Activated T-helper 1 cell treated with anti-CD3 and anti-CD28 coated beads, Interleukin-12 subunit alpha, Interleukin-12 subunit beta, Interleukin-2, Interleukin-4 antibody, amounts not matched to agents 30 ng/mL and 10 ng/mL and 1 ng/mL, durations not matched to agents 14 hours and 24 hours and 36 hours (primary cell): ENCODE measurements at regions of chr3 and their contacts with region 1.

Region 1: DNA sequence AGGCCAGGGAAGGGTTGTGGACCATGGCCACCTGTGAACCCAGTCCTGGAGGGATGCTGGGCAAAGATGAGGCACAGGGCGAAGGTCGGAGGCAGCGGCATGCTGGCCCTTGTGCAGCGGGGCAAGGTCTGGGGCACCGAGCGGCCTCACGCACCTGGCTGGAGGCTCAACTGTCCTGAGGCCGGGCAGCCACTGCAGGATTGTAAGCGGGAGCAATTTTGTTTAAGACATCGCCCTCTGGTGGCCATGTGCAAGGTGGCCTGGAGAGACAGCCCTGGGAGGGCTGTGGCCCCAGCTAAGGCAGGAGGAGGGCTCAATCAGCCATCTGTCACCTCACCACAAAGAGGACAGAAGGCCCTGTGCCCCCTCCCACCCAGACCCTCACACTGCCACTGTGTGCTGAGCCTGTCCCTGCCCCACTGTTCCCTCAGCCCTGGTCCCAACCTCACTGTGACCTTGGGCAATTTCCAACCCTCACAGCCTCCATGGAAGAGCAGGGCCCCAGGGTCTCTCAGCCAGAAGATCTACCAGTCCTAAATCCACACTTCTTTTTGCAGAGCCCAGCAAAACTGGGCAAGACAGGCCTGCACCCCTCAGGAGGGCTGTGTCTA is 46.2 kb downstream of the TPRA1 start:
- DNase-seq: peak; percentile 44
- H3K4me3 Mint-ChIP-seq: no peak overlapping the region
- H3K27ac Mint-ChIP-seq: no peak overlapping the region
- H3K4me1 Mint-ChIP-seq: peaks cover 6% of the 10 kb centered on the region
- H3K27me3 Mint-ChIP-seq: peaks cover 16% of the 10 kb centered on the region

Region 2: DNA sequence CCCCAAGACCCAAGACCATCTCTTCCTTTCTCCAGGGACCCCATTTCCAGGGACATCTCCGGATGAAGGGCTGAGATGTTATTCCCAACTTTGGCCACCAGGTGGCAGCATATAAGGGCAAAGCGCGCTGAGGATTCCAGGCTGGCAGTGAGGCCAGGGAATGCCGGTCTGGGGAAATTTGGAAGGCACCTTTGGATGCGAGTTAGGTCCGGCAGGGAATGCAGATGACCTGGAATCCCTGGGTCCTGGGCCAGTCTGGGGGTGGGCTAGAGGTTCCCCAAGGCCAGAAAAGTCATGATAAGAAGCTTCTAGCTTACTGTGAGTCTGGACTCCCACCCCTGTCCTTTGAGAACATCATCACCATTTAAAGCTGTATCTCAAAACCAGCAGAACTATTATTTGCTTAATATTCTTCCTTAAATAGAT is 1021.9 kb before region 1 on chr3:
- intact Hi-C with region 1: loop called (anchors 2 kb)
- DNase-seq: peak; percentile 11
- H3K4me3 Mint-ChIP-seq: no peak overlapping the region
- H3K27ac Mint-ChIP-seq: no peak overlapping the region
- H3K4me1 Mint-ChIP-seq: no peaks in the 10 kb centered on the region
- H3K27me3 Mint-ChIP-seq: peaks cover 33% of the 10 kb centered on the region

Region 3: GRCh38 chr3:126679318-126679751 is 865.0 kb before region 1 on chr3:
- intact Hi-C with region 1: loop called (anchors 1 kb)
- DNase-seq: peak; percentile 61
- H3K4me3 Mint-ChIP-seq: peak overlapping the region; percentile 21
- H3K27ac Mint-ChIP-seq: no peak overlapping the region
- H3K4me1 Mint-ChIP-seq: peaks cover 4% of the 10 kb centered on the region
- H3K27me3 Mint-ChIP-seq: no peaks in the 10 kb centered on the region

Region 4: GRCh38 chr3:126752303-126752842 is 791.9 kb before region 1 on chr3:
- intact Hi-C with region 1: loop called (anchors 1 kb)
- DNase-seq: peak; percentile 46
- H3K4me3 Mint-ChIP-seq: no peak overlapping the region
- H3K27ac Mint-ChIP-seq: no peak overlapping the region
- H3K4me1 Mint-ChIP-seq: peaks cover 8% of the 10 kb centered on the region
- H3K27me3 Mint-ChIP-seq: no peaks in the 10 kb centered on the region

Region 5: DNA sequence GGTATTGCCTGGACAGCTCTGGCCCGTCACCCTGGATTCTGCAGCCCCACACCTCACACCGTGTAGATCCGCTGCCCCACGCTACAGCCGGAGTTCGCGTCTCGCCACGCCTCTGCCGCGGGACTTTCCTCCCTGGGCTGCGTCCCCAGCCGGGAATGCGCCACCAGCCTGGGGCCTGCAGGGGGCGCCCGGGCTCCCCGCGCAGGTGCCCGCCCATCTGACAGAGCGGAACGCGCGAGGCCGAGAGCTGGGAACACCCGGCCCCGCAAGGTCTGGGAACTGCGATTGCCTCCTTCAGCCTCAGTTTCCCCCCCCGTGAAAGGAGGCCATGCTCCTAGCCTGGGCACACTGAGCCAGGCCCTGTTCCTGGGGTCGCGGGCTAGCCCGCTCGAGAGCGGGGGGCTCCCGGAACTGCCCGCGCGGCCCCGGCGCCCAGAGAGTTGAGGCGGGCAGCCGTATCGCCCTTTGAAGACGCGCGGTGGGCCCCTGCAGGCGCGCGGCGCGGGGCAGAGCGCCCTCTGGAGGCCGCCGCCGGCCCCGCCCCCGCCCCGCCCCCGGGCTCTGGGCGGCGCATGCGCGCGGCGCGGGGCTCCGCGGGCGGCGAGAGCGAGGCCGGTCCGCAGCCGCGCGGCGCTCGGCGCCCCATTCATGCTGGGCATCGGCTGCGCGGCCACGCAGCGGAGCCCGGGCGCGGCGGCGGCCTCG is 561.7 kb before region 1 on chr3 and contains the start of gene PLXNA1:
- intact Hi-C with region 1: loop called (anchors 1 kb)
- DNase-seq: peak; percentile 87
- H3K4me3 Mint-ChIP-seq: peak within 1 kb of the TSS; percentile 81
- H3K27ac Mint-ChIP-seq: peak within 1 kb of the TSS; percentile 90
- H3K4me1 Mint-ChIP-seq: peaks cover 23% of the 10 kb centered on the region
- H3K27me3 Mint-ChIP-seq: peaks cover 4% of the 10 kb centered on the region
- total RNA-seq, gene PLXNA1: 22.1 and 25.5 TPM in 2 replicates

Region 6: GRCh38 chr3:127374086-127375010 is 169.9 kb before region 1 on chr3:
- intact Hi-C with region 1: loop called (anchors 1 kb)
- DNase-seq: no peak
- H3K4me3 Mint-ChIP-seq: no peak overlapping the region
- H3K27ac Mint-ChIP-seq: no peak overlapping the region
- H3K4me1 Mint-ChIP-seq: no peaks in the 10 kb centered on the region
- H3K27me3 Mint-ChIP-seq: no peaks in the 10 kb centered on the region

Region 7: DNA sequence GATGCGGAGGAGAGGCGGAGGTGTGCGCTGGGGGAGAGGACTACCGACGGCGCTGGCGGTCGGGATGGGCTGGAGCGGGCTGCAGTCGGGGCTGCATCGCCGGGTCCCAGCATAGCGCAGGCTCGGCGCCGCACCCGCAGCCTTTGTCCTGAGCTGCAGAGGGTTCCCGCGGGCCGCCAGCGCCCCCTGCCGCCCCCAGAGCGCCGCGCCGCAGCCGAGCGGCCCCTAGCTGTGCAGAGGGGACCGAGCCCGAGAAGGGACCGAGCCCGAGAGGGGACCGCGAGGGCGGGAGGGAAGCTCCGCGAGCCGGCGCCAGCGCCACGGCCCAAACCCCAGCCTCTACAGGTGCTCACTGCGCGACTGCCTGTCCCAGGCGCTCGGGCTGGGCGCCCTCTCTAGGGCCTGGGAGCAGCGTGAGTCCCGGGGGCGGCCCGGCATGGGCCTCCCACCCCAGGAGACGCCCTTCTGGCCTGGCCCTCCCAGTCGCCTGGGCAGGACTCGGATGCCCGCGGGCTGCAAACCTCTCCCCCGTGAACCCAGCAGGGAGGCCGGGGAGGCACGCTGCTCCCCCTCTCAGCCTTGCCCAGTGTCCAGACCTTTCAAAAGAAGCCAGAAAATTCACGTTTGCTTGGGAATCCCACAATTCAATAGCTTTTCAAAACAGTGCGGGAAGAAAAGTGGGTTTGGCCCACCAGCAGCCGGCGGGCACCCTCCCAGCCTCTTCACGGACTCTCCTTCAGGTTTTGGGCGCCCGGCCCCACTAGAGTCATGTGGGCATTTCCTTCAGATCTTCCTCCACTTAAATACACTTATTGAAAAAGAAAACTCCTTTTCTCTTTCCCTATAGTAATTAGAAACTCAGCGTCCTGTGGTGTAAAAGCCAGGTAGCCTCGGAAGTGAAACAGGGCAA is 88.5 kb before region 1 on chr3:
- intact Hi-C with region 1: loop called (anchors 5 kb)
- DNase-seq: peak; percentile 31
- H3K4me3 Mint-ChIP-seq: no peak overlapping the region
- H3K27ac Mint-ChIP-seq: no peak overlapping the region
- H3K4me1 Mint-ChIP-seq: peaks cover 4% of the 10 kb centered on the region
- H3K27me3 Mint-ChIP-seq: peaks cover 48% of the 10 kb centered on the region